Dendritic cell treated with granulocyte-macrophage colony-stimulating factor and Interleukin-4, amounts not matched to agents 40 ng/mL and 50 ng/mL, for 4 days (primary cell): ENCODE measurements at regions of chr5 and their contacts with region 1.

Region 1: DNA sequence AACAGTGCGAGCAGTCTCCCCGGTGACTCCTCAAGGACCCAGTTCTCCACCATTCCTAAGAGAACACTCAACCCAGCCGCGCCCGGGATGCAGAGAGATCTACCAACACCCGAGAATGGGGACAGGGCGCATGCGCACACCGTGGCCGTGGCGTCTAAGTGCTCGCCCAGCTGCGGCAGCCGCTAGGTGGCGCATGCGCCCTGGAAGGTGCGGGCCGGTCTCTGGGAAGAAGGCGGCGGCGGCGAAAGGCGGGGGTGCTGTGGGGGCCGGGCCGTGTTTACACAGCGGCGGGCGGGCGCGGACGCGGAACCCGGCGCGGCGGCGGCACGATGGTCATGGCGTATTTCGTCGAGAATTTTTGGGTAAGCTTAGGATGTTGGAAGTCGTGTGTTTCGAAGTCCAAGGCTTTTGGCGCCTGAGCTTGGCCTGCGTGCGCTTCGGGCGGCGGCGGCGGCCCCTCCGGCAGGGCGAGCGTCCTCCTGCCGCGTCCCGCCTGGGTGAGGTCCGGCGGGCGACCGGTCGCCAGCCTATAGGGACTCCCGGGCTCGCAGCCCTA is at the start of gene FCHO2:
- H3K4me3 Mint-ChIP-seq: peak within 1 kb of the TSS; percentile 83
- H3K27ac Mint-ChIP-seq: peak within 1 kb of the TSS; percentile 99
- H3K4me1 Mint-ChIP-seq: peaks cover 67% of the 10 kb centered on the region
- H3K27me3 Mint-ChIP-seq: no peaks in the 10 kb centered on the region

Region 2: DNA sequence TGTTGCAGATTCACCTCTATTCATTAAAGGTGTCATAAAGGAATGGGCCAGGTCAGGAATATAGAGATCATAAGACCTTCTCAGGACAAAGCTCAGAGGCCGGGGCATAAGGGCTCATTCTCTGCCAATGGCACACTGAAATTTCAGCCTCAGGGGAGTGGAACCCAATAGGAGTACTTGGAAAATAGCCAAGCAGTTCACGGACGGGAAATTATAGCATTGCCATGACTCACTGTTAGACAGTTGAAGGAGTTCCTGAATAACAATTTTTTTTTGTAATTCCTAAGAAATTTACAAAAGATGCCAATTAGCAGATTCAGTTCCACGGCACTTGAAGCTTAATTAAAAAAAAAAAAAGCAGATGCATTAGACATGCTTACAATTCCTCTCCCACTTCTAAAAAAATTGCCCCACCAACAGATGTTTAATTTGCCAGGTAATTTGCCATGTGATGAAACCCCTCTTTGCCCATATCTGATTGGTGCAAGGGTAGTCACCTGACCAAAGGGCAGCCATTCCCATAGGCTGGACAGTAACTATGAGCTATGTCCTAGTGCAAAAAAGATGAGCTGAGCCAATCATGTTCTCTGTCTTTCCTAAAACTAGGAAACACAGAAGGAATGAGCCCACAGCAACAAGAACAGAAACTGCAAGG is 577.1 kb before region 1 on chr5:
- intact Hi-C with region 1: loop called (anchors 10 kb)
- H3K4me3 Mint-ChIP-seq: no peak overlapping the region
- H3K27ac Mint-ChIP-seq: peak overlapping the region; percentile 96
- H3K4me1 Mint-ChIP-seq: peaks cover 88% of the 10 kb centered on the region
- H3K27me3 Mint-ChIP-seq: no peaks in the 10 kb centered on the region

Region 3: DNA sequence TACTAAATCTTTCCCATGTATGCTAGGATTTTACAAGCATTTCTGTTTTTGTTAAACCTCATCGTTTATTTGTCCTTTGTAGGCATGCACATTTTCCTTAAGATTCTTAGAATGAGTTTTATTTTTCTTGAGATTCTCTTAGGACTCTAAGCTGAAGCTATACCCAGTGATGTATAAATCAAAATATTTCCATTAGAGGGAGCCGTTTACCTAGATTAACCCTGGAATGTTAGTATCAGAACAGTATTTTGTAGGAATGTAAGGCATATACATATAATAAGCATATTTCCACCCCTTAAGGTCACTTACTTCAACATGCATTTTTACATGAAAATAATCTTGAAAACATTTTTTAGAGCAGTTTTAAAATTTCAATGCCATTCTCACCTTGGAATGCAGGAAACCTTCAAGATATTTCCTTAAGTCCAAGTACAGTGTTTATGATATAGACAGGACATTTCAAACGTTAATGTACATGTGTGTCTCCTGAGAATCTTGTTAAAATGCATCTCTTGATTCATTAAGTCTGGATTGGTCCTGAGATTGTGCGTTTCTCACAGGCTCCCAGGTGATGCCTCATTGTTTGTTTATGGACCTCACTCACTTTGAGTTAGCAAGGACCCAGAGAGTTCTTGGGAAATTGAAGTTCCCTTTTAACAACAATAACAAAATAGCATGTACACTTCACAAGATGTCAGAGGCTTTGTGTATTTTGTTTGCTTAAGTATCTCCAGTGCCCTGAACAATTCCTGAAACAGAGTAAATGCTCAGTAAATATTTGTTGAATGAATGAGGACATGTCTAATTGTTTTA is 35.0 kb before region 1 on chr5:
- intact Hi-C with region 1: loop called (anchors 2 kb)
- H3K4me3 Mint-ChIP-seq: no peak overlapping the region
- H3K27ac Mint-ChIP-seq: peak overlapping the region; percentile 53
- H3K4me1 Mint-ChIP-seq: peaks cover 13% of the 10 kb centered on the region
- H3K27me3 Mint-ChIP-seq: peaks cover 3% of the 10 kb centered on the region

Region 4: DNA sequence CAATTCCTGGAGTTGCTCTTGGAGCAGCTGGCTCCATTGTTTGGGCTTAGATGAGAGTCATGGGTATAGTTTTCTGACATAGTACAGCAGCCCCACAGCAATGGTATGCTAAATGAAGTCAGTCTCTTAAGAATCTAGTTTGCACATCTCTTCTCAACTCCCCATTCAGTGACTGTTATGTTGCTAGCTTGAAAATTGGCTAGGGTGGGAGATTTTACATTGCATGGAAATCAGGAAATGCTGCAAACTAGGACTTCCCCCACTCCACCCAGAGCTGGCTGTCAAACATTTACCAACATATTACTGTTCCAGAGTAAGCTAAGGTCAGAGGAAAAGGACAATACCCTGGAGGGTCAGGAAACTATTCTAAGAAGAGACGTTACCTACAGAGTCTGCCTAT is 17.6 kb before region 1 on chr5:
- intact Hi-C with region 1: loop called (anchors 2 kb)
- H3K4me3 Mint-ChIP-seq: peak overlapping the region; percentile 50
- H3K27ac Mint-ChIP-seq: peak overlapping the region; percentile 88
- H3K4me1 Mint-ChIP-seq: peaks cover 66% of the 10 kb centered on the region
- H3K27me3 Mint-ChIP-seq: peaks cover 4% of the 10 kb centered on the region

Region 5: GRCh38 chr5:73081093-73081492 is 125.2 kb after region 1 on chr5:
- intact Hi-C with region 1: no loop called
- H3K4me3 Mint-ChIP-seq: no peak overlapping the region
- H3K27ac Mint-ChIP-seq: no peak overlapping the region
- H3K4me1 Mint-ChIP-seq: no peaks in the 10 kb centered on the region
- H3K27me3 Mint-ChIP-seq: no peaks in the 10 kb centered on the region